Heart right ventricle (tissue), 16 donors: ENCODE measurements at regions of chr2 and their contacts with region 1.

Region 1: DNA sequence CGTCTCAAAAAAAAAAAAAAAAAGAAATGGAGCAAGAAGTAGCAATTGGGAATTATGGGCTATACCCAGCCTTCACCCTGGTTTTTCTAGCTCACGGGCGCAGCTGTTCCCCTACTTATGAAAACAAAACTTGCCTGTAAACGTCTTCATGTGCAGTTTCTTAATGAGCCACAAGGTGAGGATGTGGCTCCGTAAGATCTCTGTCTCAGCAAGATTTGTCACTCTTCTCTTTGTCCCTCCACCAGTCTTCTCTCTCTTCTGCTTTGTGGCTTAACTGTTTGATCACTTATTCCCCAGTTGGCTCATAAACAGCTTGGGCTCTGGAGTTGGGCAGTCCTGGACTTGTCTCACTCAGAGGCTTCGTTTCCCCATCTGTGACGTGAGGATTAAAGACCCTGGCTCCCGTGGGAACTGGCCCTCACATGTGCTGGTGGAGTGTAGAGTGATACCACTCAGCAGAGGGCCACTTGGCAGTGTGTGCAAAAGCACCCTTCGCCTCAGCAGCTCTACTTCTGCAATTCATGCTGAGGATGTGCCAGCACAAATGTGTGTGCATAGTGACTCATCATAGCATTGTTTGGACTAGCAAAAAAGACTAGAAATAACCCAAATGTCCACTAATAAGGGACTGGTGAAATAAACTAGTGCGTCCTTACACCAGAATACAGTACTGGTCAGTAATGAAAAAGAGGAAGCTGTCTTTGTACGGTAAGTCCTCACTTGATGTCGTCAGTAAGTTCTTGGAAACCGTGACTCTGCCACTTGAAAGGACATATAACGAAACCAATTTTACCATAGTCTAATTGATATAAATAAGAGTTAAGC is 8.7 kb downstream of the CEP68 start:
- DNase-seq: peak; percentile 53 to 62
- ATAC-seq: peak; percentile 62 to 81 (median 72)
- H3K4me3 ChIP-seq: peak overlapping the region in 2 of 10 donors; percentile 10 to 12
- H3K27ac ChIP-seq: peak overlapping the region in 8 of 10 donors; percentile 5 to 86 (median 40)
- H3K4me1 ChIP-seq: peaks cover 29 to 100% (median 82%) of the 10 kb centered on the region in 9 donors
- H3K27me3 ChIP-seq: no peaks in the 10 kb centered on the region
- CTCF ChIP-seq: peak; percentile 44 to 79 (median 68)

Region 2: DNA sequence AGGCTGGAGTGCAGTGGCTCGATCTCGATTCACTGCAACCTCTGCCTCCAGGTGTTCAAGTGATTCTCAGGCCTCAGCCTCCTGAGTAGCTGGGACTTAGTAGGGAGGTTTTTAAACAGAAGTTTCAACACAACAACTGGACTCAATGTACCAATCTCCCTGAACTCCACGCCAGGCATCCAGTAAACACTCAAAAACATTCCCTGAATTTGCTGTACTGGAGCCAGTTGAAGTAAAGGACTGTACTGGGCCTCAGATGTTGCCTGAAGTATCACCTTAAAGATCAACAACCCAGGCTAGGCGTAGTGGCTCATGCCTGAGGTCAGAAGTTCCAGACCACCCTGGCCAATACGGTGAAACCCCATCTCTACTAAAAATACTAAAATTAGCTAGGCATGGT is 42.6 kb after region 1 on chr2:
- intact Hi-C with region 1: no loop called
- DNase-seq: no peak
- ATAC-seq: peak in 3 of 8 donors; percentile 16 to 76 (median 64)
- H3K4me3 ChIP-seq: no peak overlapping the region
- H3K27ac ChIP-seq: no peak overlapping the region
- H3K4me1 ChIP-seq: peaks cover 5 to 58% (median 35%) of the 10 kb centered on the region in 9 donors
- H3K27me3 ChIP-seq: no peaks in the 10 kb centered on the region
- CTCF ChIP-seq: no peak

Region 3: GRCh38 chr2:65129826-65130663 is 65.1 kb after region 1 on chr2 and contains the start of gene RAB1A:
- intact Hi-C with region 1: loop called in 5 of 10 experiments (anchors 2 to 10 kb)
- DNase-seq: peak; percentile 100
- ATAC-seq: peak; percentile 94 to 99 (median 98)
- H3K4me3 ChIP-seq: peak within 1 kb of the TSS; percentile 54 to 96 (median 78)
- H3K27ac ChIP-seq: peak within 1 kb of the TSS; percentile 86 to 99 (median 94)
- H3K4me1 ChIP-seq: peaks cover 7 to 58% (median 41%) of the 10 kb centered on the region in 9 donors
- H3K27me3 ChIP-seq: no peaks in the 10 kb centered on the region
- CTCF ChIP-seq: peak in 8 of 9 donors; percentile 37 to 71 (median 57)
- total RNA-seq, gene RAB1A: 103 to 148 (median 117) TPM

Region 4: DNA sequence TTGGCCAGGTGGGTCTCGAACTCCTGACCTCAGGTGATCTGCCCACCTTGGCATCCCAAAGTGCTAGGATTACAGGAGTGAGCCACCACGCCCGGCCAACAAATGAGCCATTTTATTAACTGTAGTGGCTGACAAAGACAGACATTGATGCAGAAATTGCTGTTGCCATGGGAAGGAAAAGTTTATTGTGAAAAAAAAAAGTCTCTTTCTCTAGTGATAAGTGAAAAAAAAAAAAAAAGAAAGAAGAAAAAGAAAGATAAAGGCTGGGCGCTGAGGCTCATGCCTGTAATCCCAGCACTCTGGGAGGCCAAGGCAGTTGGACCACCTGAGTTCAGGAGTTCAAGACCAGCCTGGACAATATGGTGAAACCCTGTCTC is 104.8 kb after region 1 on chr2:
- intact Hi-C with region 1: loop called in 7 of 10 experiments (anchors 2 to 10 kb)
- DNase-seq: no peak
- ATAC-seq: no peak
- H3K4me3 ChIP-seq: no peak overlapping the region
- H3K27ac ChIP-seq: no peak overlapping the region
- H3K4me1 ChIP-seq: peaks cover 0 to 8% (median 4%) of the 10 kb centered on the region in 9 donors
- H3K27me3 ChIP-seq: no peaks in the 10 kb centered on the region
- CTCF ChIP-seq: no peak

Region 5: DNA sequence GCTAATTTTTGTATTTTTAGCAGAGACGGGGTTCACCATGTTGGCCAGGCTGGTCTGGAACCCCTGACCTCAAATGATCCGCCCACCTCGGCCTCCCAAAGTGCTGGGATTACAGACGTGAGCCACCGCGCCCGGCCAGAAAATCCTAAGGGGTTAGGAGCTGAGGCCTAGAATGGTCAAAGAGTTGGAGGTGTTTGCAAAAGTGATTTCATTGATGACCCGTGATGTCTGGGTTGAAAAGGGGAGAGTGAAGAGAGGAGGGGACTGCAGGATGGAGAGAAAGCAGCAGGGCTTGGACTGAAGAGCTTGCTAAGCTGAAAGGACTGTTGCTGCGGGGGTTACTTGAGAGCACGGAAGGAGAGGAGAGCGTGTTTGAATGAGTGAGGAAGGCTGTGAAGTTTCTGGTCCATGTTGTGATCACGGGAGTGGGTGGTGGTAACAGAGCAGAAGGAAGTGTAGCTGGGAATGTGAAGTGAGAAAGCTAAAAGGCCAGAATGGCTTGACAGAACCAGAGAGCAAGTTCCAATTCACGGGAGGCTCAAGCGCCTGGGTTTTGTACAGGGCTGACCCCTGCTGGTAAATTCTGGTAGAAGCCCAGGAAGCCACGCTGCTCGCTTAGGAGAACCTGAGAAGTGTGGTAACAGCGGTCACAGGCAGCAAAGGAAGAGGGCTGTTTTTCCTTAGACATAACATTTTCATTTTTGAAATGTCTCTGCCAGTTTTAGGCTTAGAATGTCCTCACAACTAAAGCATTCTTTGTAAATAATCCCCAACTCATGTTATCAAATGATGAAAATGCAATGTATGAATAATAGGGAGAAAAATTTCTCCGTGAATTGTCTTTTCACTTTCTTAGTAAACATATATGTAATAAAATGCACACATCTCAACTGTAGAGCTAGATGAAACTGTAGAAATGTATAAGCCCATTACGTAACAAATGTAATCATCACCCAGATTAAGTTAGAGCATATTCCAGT is 122.2 kb after region 1 on chr2:
- intact Hi-C with region 1: loop called in 6 of 10 experiments (anchors 2 to 5 kb)
- DNase-seq: peak; percentile 55 to 77
- ATAC-seq: peak; percentile 68 to 96 (median 93)
- H3K4me3 ChIP-seq: no peak overlapping the region
- H3K27ac ChIP-seq: no peak overlapping the region
- H3K4me1 ChIP-seq: peaks cover 0 to 10% (median 0%) of the 10 kb centered on the region in 9 donors
- H3K27me3 ChIP-seq: no peaks in the 10 kb centered on the region
- CTCF ChIP-seq: peak; percentile 61 to 90 (median 80)

Region 6: DNA sequence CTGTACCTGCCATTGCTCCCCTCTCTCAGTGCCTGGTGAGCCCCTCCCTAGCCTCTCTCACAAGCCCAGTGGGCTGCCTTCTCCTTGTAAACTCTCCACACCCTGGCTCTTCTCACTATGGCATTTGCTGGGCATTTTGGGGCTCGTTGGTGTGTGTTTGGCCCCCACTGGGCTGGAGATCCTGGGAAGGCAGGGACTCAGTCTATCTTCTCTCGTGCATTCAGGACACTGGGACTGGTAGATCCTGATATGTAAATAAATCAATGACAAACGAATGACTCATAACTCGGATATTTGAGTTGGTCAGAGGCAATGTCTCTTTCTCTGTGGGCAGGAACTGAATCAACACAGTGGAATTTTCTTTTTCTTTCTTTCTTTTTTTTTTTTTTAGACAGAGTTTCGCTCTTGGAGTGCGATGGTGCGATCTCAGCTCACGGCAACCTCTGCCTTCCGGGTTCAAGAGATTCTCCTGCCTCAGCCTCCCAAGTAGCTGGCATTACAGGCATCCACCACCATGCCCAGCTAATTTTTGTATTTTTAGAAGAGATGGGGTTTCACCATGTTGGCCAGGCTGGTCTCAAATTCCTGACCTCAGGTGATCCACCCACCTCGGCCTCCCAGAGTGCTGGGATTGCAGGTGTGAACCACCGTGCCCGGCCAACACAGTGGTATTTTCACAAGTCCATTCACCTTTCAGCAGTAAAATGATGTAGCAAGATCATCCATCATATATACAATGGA is 512.1 kb after region 1 on chr2:
- intact Hi-C with region 1: loop called in 3 of 10 experiments (anchors 10 kb)
- DNase-seq: no peak
- ATAC-seq: no peak
- H3K4me3 ChIP-seq: no peak overlapping the region
- H3K27ac ChIP-seq: peak overlapping the region in 1 of 10 donors; percentile 16
- H3K4me1 ChIP-seq: peaks cover 0 to 30% (median 12%) of the 10 kb centered on the region in 9 donors
- H3K27me3 ChIP-seq: peaks cover 0 to 4% (median 0%) of the 10 kb centered on the region in 7 donors
- CTCF ChIP-seq: no peak